ENCODE measurements at regions of chr2 and their contacts with region 1.

Region 1: GRCh38 chr2:240519396-240520129 is 38.2 kb downstream of the ANKMY1 start:
- DNase-seq: no peak
- H3K4me3 Mint-ChIP-seq: no peak overlapping the region
- H3K27ac Mint-ChIP-seq: no peak overlapping the region
- H3K4me1 Mint-ChIP-seq: peaks cover under 1% of the 10 kb centered on the region
- H3K27me3 Mint-ChIP-seq: no peaks in the 10 kb centered on the region
- CTCF ChIP-seq: no peak

Region 2: GRCh38 chr2:240325016-240325944 is 194.3 kb before region 1 on chr2:
- CTCF ChIA-PET with region 1: no interaction called
- intact Hi-C with region 1: no loop called
- DNase-seq: peak; percentile 61
- H3K4me3 Mint-ChIP-seq: no peak overlapping the region
- H3K27ac Mint-ChIP-seq: no peak overlapping the region
- H3K4me1 Mint-ChIP-seq: peaks cover 10% of the 10 kb centered on the region
- H3K27me3 Mint-ChIP-seq: peaks cover 69% of the 10 kb centered on the region
- CTCF ChIP-seq: no peak

Region 3: DNA sequence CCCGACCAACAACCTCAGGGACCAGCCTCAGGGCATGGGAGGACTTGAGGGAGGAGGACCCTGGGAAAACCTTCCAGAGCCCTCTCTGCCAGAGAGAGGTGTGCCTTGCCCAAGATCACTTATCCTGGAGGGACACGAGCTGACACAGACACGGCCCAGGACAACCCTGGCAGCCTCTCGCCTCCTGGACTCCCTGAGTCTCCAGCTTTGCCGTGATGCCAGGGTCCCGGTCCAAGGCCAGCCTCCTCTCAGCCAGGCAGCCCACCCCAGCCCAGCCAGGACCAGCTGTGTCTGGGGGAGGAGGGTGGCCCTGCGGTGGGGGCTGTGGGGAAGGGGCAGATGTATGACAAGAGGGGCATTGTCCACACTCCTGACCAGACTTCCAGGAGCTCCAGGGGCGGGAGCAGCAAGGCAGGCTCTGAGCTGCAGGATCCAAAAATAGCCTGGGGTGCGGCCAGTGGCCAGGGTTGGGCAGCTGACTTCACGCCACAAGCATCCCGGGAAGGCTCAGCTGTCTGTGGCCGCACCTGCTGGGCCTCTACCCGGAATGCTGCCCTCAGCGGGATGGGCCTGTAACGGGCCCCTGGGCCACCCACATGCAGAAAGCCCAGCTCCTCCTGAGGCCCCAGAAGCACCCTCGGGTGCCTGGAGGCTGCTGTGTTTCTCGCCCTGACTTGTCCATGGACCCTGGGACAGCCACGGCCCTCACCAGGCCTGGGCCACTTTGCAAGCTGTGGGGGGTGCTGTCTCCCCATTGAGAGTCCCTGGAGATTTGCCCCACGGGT is 149.6 kb before region 1 on chr2:
- CTCF ChIA-PET with region 1: no interaction called
- intact Hi-C with region 1: no loop called
- DNase-seq: peak; percentile 92
- H3K4me3 Mint-ChIP-seq: no peak overlapping the region
- H3K27ac Mint-ChIP-seq: peak overlapping the region; percentile 69
- H3K4me1 Mint-ChIP-seq: peaks cover 15% of the 10 kb centered on the region
- H3K27me3 Mint-ChIP-seq: no peaks in the 10 kb centered on the region
- CTCF ChIP-seq: no peak

Region 4: GRCh38 chr2:240538031-240538780 is 18.6 kb after region 1 on chr2:
- CTCF ChIA-PET with region 1: no interaction called
- intact Hi-C with region 1: no loop called
- DNase-seq: no peak
- H3K4me3 Mint-ChIP-seq: no peak overlapping the region
- H3K27ac Mint-ChIP-seq: no peak overlapping the region
- H3K4me1 Mint-ChIP-seq: no peaks in the 10 kb centered on the region
- H3K27me3 Mint-ChIP-seq: no peaks in the 10 kb centered on the region
- CTCF ChIP-seq: no peak

Region 5: GRCh38 chr2:240714747-240715725 is 195.5 kb after region 1 on chr2:
- CTCF ChIA-PET with region 1: no interaction called
- intact Hi-C with region 1: loop called (anchors 5 kb)
- DNase-seq: no peak
- H3K4me3 Mint-ChIP-seq: no peak overlapping the region
- H3K27ac Mint-ChIP-seq: peak overlapping the region; percentile 44
- H3K4me1 Mint-ChIP-seq: no peaks in the 10 kb centered on the region
- H3K27me3 Mint-ChIP-seq: peaks cover 13% of the 10 kb centered on the region
- CTCF ChIP-seq: no peak

Measured in Calu3 (cell line).